GM12878 (cell line): ENCODE measurements at regions of chr14 and their contacts with region 1.

Region 1: DNA sequence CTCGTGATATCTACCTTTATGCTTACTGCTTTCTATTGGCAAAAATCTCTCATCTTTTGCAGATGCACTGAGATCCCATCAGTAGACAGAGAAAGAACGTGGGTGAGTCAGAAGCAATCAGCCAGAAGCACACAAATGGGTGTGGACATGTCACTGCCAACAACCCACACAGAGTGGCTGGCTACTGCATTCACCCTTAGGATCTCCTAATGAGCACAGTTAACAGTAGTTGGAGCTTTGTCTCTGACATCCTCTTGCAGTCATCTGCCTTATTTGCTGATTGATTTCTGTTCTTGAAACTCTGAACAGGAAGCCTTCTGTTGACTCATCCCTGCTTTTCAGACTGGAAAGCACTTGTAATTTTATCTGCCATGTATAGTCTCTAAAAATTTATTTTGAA is 117.2 kb downstream of the RGS6 start:
- DNase-seq: peak; percentile 64
- ATAC-seq: peak; percentile 99
- H3K4me3 ChIP-seq: no peak overlapping the region
- H3K27ac ChIP-seq: no peak overlapping the region
- H3K4me1 ChIP-seq: no peaks in the 10 kb centered on the region
- H3K27me3 ChIP-seq: no peaks in the 10 kb centered on the region
- CTCF ChIP-seq: no peak
- EP300 ChIP-seq: peak; percentile 33 to 47; a peak in 1 of 4 replicates
- POLR2A ChIP-seq: no peak
- RAD21 ChIP-seq: no peak; the same call in 1 of the 2 replicates

Region 2: GRCh38 chr14:72060917-72061316 is 11.5 kb after region 1 on chr14:
- CTCF ChIA-PET with region 1: interaction called, 4 read pairs
- POLR2A ChIA-PET with region 1: interaction called, 5 read pairs
- RAD21 ChIA-PET with region 1: interaction called, 20 read pairs
- SMC1A ChIA-PET with region 1: interaction called, 8 read pairs
- in situ Hi-C with region 1: no loop called
- intact Hi-C with region 1: no loop called
- DNase-seq: no peak
- ATAC-seq: no peak
- H3K4me3 ChIP-seq: no peak overlapping the region
- H3K27ac ChIP-seq: no peak overlapping the region
- H3K4me1 ChIP-seq: no peaks in the 10 kb centered on the region
- H3K27me3 ChIP-seq: no peaks in the 10 kb centered on the region
- CTCF ChIP-seq: no peak
- EP300 ChIP-seq: no peak
- POLR2A ChIP-seq: no peak
- RAD21 ChIP-seq: no peak

Region 3: DNA sequence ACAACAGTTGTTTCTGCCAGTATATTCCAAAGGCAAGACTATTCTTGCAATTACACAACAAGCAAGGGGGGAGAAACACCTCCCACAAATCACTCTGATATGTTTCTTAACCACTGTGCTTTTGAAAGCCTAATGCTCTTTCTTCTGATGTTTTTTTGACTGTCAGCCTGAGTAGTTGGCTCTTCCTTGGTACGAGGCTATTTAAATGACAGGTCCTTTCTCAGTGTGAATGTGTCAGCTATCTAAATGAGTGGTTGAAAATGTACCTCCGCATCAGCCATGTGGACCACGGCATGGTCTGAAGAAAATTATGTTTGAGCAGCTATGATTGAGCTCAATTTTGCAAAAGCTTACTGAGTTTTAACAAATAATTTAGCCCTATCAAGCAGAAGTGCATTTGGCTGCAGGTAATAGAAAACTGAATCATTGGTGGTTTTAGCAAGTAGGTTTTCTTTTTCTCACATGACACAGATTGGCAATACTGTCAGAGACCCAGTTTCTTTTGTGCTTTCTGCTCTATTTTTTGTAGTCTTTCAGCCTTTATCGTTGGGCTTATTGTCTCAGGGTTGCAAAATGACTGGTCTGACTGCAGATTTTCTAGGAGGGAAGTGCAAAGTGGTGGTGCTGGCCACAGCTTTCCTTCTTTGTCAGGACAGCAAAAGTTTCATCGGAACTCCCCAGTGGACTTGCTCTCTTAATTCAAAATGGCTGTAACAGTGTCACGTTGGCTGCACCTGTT is 45.6 kb after region 1 on chr14:
- CTCF ChIA-PET with region 1: no interaction called
- POLR2A ChIA-PET with region 1: no interaction called
- RAD21 ChIA-PET with region 1: interaction called, 4 read pairs
- SMC1A ChIA-PET with region 1: interaction called, 16 read pairs
- in situ Hi-C with region 1: no loop called
- intact Hi-C with region 1: no loop called
- DNase-seq: peak; percentile 48
- ATAC-seq: peak; percentile 81
- H3K4me3 ChIP-seq: 0 out of 2 replicates have a peak overlapping the region, but pooled peaks have one; percentile 39
- H3K27ac ChIP-seq: peak overlapping the region; percentile 53
- H3K4me1 ChIP-seq: no peaks in the 10 kb centered on the region
- H3K27me3 ChIP-seq: no peaks in the 10 kb centered on the region
- CTCF ChIP-seq: no peak
- EP300 ChIP-seq: peak in 1 of 2 experiments; percentile 35; a peak in 2 of 4 replicates
- POLR2A ChIP-seq: no peak
- RAD21 ChIP-seq: peak; percentile 21; the same call in 1 of the 2 replicates

Region 4: GRCh38 chr14:72142328-72142727 is 92.9 kb after region 1 on chr14:
- CTCF ChIA-PET with region 1: no interaction called
- POLR2A ChIA-PET with region 1: no interaction called
- RAD21 ChIA-PET with region 1: no interaction called
- SMC1A ChIA-PET with region 1: no interaction called
- in situ Hi-C with region 1: no loop called
- intact Hi-C with region 1: no loop called
- DNase-seq: no peak
- ATAC-seq: no peak; the same call in 2 of the 3 replicates
- H3K4me3 ChIP-seq: no peak overlapping the region
- H3K27ac ChIP-seq: no peak overlapping the region
- H3K4me1 ChIP-seq: no peaks in the 10 kb centered on the region
- H3K27me3 ChIP-seq: no peaks in the 10 kb centered on the region
- CTCF ChIP-seq: no peak
- EP300 ChIP-seq: no peak
- POLR2A ChIP-seq: no peak
- RAD21 ChIP-seq: no peak